ENCODE measurements at regions of chr17 and their contacts with region 1.

Region 1: GRCh38 chr17:56939901-56940343 is 20.9 kb downstream of the COIL start:
- DNase-seq: peak; percentile 63 to 80
- ATAC-seq: peak; percentile 88 to 92
- H3K4me3 ChIP-seq: no peak overlapping the region
- H3K27ac ChIP-seq: peak overlapping the region in 1 of 2 experiments; percentile 17; a peak in 1 of 6 replicates
- H3K4me1 ChIP-seq: no peaks in the 10 kb centered on the region
- CTCF ChIP-seq: peak; percentile 81
- EP300 ChIP-seq: no peak
- POLR2A ChIP-seq: no peak
- RAD21 ChIP-seq: peak; percentile 93 to 94

Region 2: GRCh38 chr17:56833809-56834379 is 106.0 kb before region 1 on chr17 and contains the starts of genes C17orf67 and DGKE:
- CTCF ChIA-PET with region 1: interaction called, 283 read pairs
- POLR2A ChIA-PET with region 1: no interaction called
- DNase-seq: peak; percentile 85 to 97
- ATAC-seq: peak; percentile 81 to 93
- H3K4me3 ChIP-seq: peak within 1 kb of the TSS; percentile 85
- H3K27ac ChIP-seq: peak within 1 kb of the TSS; percentile 87 to 89
- H3K4me1 ChIP-seq: peaks cover 25% of the 10 kb centered on the region
- CTCF ChIP-seq: no peak
- EP300 ChIP-seq: no peak
- POLR2A ChIP-seq: peak; percentile 87
- RAD21 ChIP-seq: no peak
- polyA plus RNA-seq, gene C17orf67: 1.8 and 2.9 TPM in 2 replicates
- polyA plus RNA-seq, gene DGKE: 4.6 and 5.8 TPM in 2 replicates

Region 3: GRCh38 chr17:56891784-56892183 is 48.1 kb before region 1 on chr17:
- CTCF ChIA-PET with region 1: interaction called, 10 read pairs
- POLR2A ChIA-PET with region 1: no interaction called
- DNase-seq: peak in 1 of 2 experiments; percentile 30
- ATAC-seq: peak in 1 of 2 experiments; percentile 57; a peak in 3 of 6 replicates
- H3K4me3 ChIP-seq: no peak overlapping the region
- H3K27ac ChIP-seq: no peak overlapping the region
- H3K4me1 ChIP-seq: peaks cover 6% of the 10 kb centered on the region
- CTCF ChIP-seq: 0 out of 3 replicates have a peak, but pooled peaks have one; percentile 22
- EP300 ChIP-seq: no peak
- POLR2A ChIP-seq: no peak
- RAD21 ChIP-seq: no peak

Region 4: DNA sequence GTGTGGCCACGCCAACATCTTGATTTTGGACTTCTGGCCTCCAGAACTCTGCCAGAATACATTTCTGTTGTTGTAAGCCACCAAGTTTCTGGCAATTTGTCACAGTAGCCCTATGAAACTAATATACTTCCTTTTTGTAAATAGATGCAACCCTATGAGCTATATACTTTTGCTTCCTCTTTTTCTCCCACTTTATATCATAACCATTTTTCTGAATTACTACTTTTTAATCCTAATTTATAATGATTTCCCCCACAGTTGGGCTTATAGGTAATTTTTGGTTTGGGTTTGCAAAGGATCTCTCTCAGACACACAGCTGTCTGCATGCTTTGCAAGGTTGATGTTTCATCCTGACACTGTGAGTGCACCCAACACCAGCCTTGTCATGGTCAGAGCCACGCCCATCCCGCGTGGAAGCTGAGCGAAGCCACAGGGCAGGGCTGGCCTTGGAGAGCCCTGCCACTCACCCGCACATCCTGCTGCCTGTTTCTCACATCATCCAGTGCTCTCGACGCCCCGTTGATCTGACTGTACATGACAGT is 31.9 kb before region 1 on chr17:
- CTCF ChIA-PET with region 1: interaction called, 15 read pairs
- POLR2A ChIA-PET with region 1: no interaction called
- DNase-seq: peak in 1 of 2 experiments; percentile 53
- ATAC-seq: peak; percentile 33 to 39; a peak in 3 of 6 replicates
- H3K4me3 ChIP-seq: no peak overlapping the region
- H3K27ac ChIP-seq: no peak overlapping the region
- H3K4me1 ChIP-seq: peaks cover 29% of the 10 kb centered on the region; the same call in 2 of the 3 replicates
- CTCF ChIP-seq: no peak
- EP300 ChIP-seq: no peak
- POLR2A ChIP-seq: no peak
- RAD21 ChIP-seq: no peak

Region 5: GRCh38 chr17:56926701-56927590 is 13.0 kb before region 1 on chr17:
- CTCF ChIA-PET with region 1: interaction called, 52 read pairs
- POLR2A ChIA-PET with region 1: no interaction called
- DNase-seq: no peak
- ATAC-seq: no peak
- H3K4me3 ChIP-seq: no peak overlapping the region
- H3K27ac ChIP-seq: no peak overlapping the region
- H3K4me1 ChIP-seq: no peaks in the 10 kb centered on the region
- CTCF ChIP-seq: no peak
- EP300 ChIP-seq: no peak
- POLR2A ChIP-seq: no peak
- RAD21 ChIP-seq: no peak

Region 6: DNA sequence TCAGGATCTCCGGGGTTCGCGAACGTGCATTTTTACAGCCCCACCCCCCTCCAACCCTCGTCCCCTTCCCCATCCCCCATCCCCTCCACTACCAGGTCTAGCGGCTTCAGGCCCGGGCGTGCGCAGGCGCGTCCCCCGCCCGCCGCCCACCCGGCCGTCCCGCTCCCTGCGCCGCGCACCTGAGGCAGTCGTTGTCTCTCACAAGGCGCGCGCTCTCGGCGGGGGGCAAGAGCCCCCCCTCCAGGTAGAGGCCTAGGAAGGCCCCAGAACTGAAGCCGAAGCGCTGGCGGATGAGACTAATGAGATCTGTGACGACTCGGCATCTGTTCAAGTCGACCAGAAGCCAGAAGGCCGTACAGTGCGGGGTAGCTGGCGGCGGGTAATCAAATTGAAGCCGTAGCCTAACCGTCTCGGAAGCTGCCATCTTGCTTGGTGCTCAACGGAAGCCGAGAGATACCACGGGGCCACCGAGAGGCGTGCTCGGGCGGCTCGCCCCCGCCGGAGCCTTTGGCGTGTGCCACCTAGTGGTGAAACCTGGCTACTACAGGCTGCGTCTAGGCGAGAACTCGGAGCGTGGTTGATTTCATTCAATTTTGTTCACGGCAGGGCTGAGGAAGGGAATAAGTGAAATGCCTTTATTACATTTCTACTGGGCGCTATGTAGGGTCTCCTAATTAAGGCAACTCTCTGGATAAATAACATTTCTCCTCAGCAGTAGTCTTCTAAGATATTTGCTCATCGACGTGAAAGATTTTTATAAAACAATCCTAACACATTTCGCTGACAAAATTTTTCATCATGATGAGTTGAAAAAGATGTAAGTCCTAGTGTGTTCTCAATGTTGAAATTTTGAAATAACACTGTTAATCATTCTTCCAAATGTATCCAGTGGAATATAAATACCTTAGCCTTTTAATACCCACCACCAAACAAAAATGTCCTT is 20.9 kb after region 1 on chr17 and contains the start of gene COIL:
- CTCF ChIA-PET with region 1: interaction called, 14 read pairs
- POLR2A ChIA-PET with region 1: no interaction called
- DNase-seq: peak; percentile 92 to 96
- ATAC-seq: peak; percentile 97 to 99
- H3K4me3 ChIP-seq: peak within 1 kb of the TSS; percentile 75
- H3K27ac ChIP-seq: peak within 1 kb of the TSS; percentile 91 to 92
- H3K4me1 ChIP-seq: peaks cover 17% of the 10 kb centered on the region; the same call in 2 of the 3 replicates
- CTCF ChIP-seq: peak; percentile 94
- EP300 ChIP-seq: no peak
- POLR2A ChIP-seq: peak; percentile 69
- RAD21 ChIP-seq: peak; percentile 64 to 73
- polyA plus RNA-seq, gene COIL: 13.5 and 16.9 TPM in 2 replicates